MCF 10A (cell line): ENCODE measurements at regions of chr12 and their contacts with region 1.

Region 1: GRCh38 chr12:93467351-93468007 is at the start of gene MRPL42:
- DNase-seq: peak; percentile 91
- H3K4me3 Mint-ChIP-seq: peak within 1 kb of the TSS; percentile 91
- H3K27ac Mint-ChIP-seq: peak within 1 kb of the TSS; percentile 92
- H3K4me1 Mint-ChIP-seq: peaks cover 24% of the 10 kb centered on the region
- H3K27me3 Mint-ChIP-seq: no peaks in the 10 kb centered on the region
- CTCF ChIP-seq: peak; percentile 67
- total RNA-seq, gene MRPL42: 76.9 and 90.2 TPM in 2 replicates

Region 2: DNA sequence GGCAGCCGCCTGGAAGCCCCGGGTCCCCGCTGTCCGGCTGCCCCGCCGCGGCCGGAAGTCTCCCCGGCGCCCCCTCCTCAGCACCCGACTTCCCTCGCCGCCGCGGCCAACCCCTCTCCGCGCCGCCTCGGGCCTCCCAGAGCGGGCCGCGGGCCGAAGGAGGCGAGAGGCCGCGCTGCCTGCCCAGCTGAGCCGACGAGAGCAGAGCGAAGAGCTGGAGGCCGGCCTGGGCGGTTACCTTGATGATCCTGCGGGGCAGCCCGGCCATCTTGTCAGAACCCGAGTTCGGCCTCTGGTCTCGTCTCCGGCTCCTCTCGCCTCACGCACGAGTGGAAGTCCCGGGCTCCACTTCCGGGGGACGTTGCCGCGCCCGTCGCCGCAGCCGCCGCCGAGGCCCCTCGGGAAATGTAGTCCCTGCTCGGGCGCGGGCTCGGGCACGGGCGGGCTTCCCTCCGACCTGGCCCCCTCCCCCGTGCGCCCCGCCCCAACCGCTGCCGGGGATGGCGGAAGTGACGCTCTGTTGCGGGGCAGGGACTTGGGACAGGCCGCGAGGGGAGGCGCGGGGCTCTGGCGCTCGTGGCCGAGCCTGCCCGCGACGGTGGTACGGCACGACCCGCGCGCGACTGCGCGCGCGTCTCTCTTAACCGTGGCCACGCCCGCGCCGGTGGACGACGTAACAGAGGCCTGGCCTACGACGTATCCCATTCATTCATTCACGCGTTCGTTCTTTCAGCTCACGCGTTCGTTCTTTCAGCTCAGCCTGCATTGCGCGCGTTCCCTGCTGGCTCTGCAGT is 25.7 kb before region 1 on chr12 and contains the start of gene UBE2N:
- CTCF ChIA-PET with region 1: interaction called, 7 read pairs
- POLR2A ChIA-PET with region 1: interaction called, 17 read pairs
- intact Hi-C with region 1: no loop called
- DNase-seq: peak; percentile 93
- H3K4me3 Mint-ChIP-seq: peak within 1 kb of the TSS; percentile 99
- H3K27ac Mint-ChIP-seq: peak within 1 kb of the TSS; percentile 98
- H3K4me1 Mint-ChIP-seq: peaks cover 41% of the 10 kb centered on the region
- H3K27me3 Mint-ChIP-seq: no peaks in the 10 kb centered on the region
- CTCF ChIP-seq: no peak
- total RNA-seq, gene UBE2N: 144 and 164 TPM in 2 replicates